Testis (tissue), 5 donors: ENCODE measurements at regions of chr20 and their contacts with region 1.

Region 1: GRCh38 chr20:43749734-43750294 is 23.0 kb upstream of the GTSF1L start:
- DNase-seq: peak; percentile 90
- H3K4me3 ChIP-seq: no peak overlapping the region
- H3K27ac ChIP-seq: no peak overlapping the region
- H3K4me1 ChIP-seq: no peaks in the 10 kb centered on the region
- H3K27me3 ChIP-seq: no peaks in the 10 kb centered on the region
- CTCF ChIP-seq: peak; percentile 95 to 100 (median 97)
- POLR2A ChIP-seq: no peak

Region 2: DNA sequence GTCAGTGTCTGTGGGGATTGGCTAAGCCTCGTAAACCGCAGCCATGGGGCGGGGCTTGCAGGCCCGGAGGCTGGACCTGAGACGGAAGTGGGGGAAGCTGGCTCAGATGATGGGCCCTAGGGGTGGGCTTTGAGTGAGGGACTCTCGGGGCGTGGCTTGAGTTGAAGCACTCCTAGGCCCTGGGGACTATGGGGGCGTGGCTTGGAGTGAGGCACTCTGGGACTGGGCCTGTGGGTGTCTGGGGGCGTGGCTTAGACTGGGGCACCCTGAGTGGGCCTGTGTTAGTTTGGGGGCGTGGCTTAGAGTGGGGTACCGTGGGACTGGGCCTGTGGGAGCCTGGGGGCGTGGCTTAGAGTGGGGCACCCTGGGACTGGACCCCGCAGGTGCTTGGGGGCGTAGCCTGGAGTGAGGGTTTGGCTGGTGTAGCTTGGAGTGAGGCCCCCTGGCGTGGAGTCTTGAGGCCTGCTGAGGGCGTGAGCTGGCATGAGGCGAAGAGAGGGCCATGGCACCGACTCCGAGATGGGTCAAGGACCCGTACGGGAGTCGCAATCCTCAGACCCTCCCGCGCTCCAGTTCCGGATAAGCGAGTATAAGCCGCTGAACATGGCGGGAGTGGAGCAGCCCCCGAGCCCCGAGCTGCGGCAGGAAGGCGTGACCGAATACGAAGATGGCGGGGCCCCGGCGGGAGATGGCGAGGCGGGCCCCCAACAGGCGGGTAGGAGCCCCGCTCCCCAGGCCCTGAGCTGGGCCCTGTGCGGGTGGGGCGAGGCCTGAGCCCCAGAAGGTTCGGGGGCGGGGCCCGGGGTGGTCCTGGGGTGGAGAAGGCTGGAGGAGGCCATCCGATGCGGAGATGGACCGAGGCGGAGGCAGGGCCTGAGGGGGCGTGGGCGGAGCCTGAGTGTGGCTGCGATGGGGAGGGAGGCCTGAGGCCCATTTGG is 235.5 kb before region 1 on chr20:
- intact Hi-C with region 1: no loop called
- DNase-seq: peak; percentile 99
- H3K4me3 ChIP-seq: peak overlapping the region; percentile 68 to 80
- H3K27ac ChIP-seq: peak overlapping the region; percentile 78 to 82
- H3K4me1 ChIP-seq: peaks cover 13% of the 10 kb centered on the region
- H3K27me3 ChIP-seq: no peaks in the 10 kb centered on the region
- CTCF ChIP-seq: no peak
- POLR2A ChIP-seq: no peak

Region 3: DNA sequence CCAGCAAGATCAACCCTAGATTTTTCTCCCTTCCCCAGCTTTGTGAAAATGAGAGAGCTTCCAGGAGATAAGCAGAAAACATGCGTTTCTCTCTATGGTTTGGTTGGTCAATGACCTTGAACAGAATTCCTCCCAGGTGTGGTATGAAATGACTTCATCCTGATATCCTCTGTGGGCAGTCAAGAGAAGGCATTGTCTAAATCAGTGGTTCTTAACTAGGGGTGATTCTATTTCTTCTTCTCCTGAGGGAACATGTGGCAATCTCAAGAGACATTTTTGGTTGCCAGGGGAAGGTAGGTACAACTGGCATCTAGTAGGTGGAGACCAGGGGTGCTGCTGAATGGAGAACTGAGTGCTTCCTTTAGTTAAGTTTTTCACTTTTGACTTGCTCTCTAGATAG is 146.7 kb before region 1 on chr20:
- intact Hi-C with region 1: no loop called
- DNase-seq: no peak
- H3K4me3 ChIP-seq: no peak overlapping the region
- H3K27ac ChIP-seq: no peak overlapping the region
- H3K4me1 ChIP-seq: peaks cover 13% of the 10 kb centered on the region
- H3K27me3 ChIP-seq: no peaks in the 10 kb centered on the region
- CTCF ChIP-seq: no peak
- POLR2A ChIP-seq: no peak

Region 4: DNA sequence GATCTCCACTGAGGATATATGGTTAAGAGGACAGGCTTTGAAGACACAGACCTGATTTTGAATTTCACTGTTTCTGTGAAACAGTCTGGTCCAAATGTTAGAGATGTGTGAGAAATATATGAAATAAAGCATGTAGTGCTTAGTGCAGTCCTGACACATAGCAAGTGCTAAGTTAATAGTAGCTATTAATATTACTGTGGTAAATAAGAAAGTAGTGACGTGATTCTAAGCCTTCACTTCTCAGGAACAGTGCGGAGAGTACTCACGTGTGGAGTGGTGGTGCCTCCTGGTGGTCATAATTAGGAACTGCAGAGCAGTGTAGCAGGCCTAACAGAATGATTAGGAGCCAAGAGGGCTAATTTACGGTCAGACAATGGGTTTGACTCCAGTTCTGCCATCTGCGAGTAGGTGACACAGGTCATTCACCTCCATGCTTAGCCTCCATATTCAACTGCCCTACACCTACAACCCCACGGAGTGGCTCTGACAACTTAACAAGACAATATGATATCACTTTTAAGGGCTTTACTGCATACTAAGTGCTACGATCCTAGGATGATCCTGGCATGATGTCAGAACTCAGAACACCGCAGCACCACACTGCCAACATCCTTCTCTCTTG is 330.9 kb after region 1 on chr20:
- intact Hi-C with region 1: loop called (anchors 2 kb)
- DNase-seq: peak; percentile 90
- H3K4me3 ChIP-seq: no peak overlapping the region
- H3K27ac ChIP-seq: no peak overlapping the region
- H3K4me1 ChIP-seq: no peaks in the 10 kb centered on the region
- H3K27me3 ChIP-seq: no peaks in the 10 kb centered on the region
- CTCF ChIP-seq: peak; percentile 99 to 100 (median 99)
- POLR2A ChIP-seq: no peak

Region 5: GRCh38 chr20:44388466-44389023 is 638.7 kb after region 1 on chr20:
- intact Hi-C with region 1: no loop called
- DNase-seq: peak; percentile 84
- H3K4me3 ChIP-seq: peak overlapping the region in 1 of 2 donors; percentile 17
- H3K27ac ChIP-seq: no peak overlapping the region
- H3K4me1 ChIP-seq: peaks cover 8% of the 10 kb centered on the region
- H3K27me3 ChIP-seq: no peaks in the 10 kb centered on the region
- CTCF ChIP-seq: peak; percentile 74 to 87 (median 78)
- POLR2A ChIP-seq: no peak